GM13977 (cell line): ENCODE measurements at regions of chr14 and their contacts with region 1.

Region 1: DNA sequence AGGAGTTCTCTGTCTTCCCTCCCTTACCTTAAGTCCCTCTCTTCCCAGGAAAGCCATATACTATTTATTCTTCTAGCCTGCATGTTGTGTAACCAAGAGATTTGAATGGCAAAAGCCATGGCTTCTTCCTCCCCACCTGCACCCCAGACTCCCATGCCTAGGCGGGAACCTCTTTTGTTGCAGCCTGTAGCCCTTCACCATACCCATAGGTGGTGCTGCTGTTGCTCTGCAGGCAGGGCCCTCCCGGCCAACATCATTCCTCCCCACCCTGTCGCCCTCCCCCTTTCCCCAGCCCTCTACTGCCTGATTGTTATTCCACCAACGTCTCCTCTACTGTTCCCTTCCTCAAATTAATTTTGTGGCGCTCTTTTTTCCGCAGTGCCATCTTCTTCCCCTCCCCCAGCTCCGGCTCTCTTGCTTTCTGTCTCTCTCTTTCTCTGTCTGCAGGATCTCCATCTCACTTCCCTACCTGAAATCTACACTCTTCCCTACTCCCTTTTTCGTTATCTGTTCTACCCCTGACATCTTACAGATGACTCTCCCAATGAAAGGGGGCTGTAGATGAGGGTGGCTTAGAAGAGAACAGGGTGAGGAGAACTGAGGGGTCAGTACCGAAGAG is 13.8 kb downstream of the NGDN start:
- DNase-seq: peak; percentile 18
- CTCF ChIP-seq: peak; percentile 58

Region 2: DNA sequence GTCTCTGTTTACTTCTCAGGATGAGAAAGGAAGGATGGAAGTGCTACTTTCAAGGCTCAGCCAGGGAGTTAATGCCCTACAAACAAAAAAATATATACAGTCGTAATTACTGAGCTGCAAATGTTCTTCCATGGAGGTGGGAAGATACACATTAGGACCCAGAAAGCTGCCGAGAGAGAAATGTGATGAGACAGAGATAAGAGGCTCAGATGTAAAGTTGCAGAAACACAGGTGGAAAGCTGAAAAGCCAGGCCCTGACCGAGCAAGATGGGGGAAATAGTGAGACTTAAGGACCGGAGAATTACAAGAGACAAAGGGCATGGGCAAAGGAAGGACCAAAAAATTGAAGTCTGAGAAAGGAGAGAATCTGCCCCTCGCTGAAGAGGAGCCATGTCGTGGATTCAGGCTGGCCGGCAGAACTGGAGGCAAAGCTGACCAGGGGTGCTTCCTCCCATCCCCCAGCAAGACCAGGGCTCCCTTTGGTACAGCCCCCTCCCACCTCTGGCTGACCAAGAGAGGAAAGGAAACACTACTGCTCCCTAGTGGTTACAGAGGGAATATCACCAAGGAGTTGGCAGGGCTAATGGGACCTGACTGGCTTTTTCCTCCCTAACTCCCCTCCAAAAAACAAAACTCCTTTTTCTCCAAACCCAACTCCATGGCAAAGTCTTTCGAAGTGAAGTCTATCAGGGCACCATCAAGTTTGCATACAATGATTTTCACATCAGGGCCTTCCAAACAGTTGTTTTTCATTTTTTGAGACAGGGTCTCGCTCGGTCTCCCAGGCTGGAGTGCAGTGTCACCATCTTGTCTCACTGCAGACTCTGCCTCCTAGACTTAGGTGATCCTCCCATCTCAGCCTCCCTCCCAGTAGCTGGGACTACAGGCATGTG is 56.1 kb after region 1 on chr14:
- in situ Hi-C with region 1: loop called (anchors 10 kb)
- DNase-seq: peak; percentile 83
- CTCF ChIP-seq: peak; percentile 77